ENCODE measurements at regions of chr11 and their contacts with region 1.

Region 1: DNA sequence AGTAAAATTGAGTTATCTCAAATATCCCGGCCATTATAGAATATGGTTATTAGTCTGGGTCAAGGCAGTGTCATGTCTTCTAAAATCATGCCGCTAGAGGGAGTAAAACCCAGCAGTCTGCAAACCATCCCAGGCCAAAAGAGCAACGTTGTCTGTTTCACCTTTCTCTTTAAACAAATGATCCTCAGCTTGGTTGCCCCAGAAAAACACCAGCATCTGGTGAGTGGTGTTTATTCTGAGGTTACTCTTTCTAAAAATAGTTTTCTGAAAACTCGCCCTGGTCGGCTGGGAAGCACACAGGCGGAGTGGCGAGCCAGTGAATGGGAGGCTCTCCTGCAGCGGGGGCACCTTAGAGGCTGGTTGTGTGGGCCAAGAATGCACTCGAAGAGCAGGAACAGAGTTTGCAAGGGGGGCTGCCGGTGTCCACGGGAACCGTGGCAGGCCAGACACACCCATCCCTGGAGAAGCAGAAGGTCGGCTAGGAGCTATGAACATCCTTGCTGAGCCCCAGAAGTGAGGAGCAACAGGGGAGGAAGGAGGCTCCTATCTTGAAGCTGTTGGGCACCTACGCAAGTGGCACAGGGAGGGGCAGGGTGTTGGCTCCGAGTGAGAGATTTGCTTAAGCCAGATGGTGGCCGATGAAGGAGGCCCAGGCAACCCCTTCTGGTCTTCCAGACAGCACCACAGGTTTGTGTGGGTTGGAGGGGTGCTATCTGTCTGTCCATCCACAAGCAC is 297.1 kb downstream of the ETS1 start:
- DNase-seq: peak; percentile 29 to 76
- ATAC-seq: peak; percentile 81 to 91 (median 89)
- H3K4me3 ChIP-seq: peak overlapping the region in 7 of 10 donors; percentile 17 to 43 (median 29)
- H3K27ac ChIP-seq: peak overlapping the region in 9 of 10 donors; percentile 24 to 83 (median 65)
- H3K4me1 ChIP-seq: peaks cover 2 to 53% (median 39%) of the 10 kb centered on the region in 9 donors
- H3K27me3 ChIP-seq: no peaks in the 10 kb centered on the region
- CTCF ChIP-seq: peak; percentile 81 to 94 (median 88)

Region 2: GRCh38 chr11:128172046-128172878 is 118.0 kb before region 1 on chr11:
- intact Hi-C with region 1: loop called in 8 of 10 experiments (anchors 5 to 10 kb)
- DNase-seq: peak; percentile 73 to 87
- ATAC-seq: peak in 7 of 8 donors; percentile 77 to 92 (median 87)
- H3K4me3 ChIP-seq: no peak overlapping the region
- H3K27ac ChIP-seq: peak overlapping the region in 1 of 10 donors; percentile 16
- H3K4me1 ChIP-seq: peaks cover 0 to 13% (median 0%) of the 10 kb centered on the region in 9 donors
- H3K27me3 ChIP-seq: peaks cover 0 to 5% (median 0%) of the 10 kb centered on the region in 7 donors
- CTCF ChIP-seq: peak; percentile 59 to 89 (median 82)

Region 3: DNA sequence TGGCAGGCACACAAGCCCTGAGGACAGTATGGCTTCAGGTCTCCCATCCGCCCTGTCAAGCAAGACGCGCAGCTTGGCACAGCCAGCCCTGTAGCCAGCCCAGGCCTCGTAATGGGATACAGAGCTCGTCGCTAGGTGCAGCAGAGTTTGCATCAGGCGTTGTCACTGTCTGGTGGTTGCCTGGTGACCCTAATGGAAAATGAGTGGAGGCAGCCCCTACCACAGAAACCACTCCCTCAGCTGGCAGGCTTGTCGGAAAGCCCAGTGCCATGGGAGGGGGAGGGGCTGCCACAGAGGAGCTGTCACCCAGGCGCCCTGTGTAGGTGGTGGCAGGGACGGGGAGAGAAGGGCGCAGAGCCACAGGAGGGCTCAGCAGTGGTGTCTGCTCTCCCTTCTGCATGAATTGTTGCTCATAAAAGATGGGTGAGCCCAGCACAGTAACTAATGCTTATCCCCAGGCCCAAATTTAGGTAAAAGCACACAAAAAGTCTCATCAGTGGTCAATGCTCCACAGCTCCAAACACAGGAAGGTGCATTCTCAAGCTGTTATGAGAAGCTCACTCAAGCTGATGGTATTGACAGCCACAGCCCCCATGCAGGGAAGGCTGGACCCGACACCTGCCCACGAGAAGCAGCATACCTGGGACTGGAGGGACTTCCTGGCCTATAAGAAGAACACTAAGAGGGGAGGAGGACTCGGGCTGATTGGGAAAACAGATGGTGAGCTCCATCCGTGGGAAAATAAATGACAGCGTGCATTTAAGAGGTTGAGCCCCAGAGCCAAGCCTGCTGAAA is 132.5 kb after region 1 on chr11:
- intact Hi-C with region 1: loop called in 1 of 10 experiments (anchors 5 kb)
- DNase-seq: peak; percentile 66 to 80
- ATAC-seq: peak in 6 of 8 donors; percentile 44 to 95 (median 66)
- H3K4me3 ChIP-seq: peak overlapping the region in 1 of 10 donors; percentile 6
- H3K27ac ChIP-seq: peak overlapping the region in 8 of 10 donors; percentile 22 to 88 (median 76)
- H3K4me1 ChIP-seq: peaks cover 16 to 48% (median 37%) of the 10 kb centered on the region in 9 donors
- H3K27me3 ChIP-seq: no peaks in the 10 kb centered on the region
- CTCF ChIP-seq: no peak

Region 4: GRCh38 chr11:128506999-128507611 is 216.8 kb after region 1 on chr11:
- intact Hi-C with region 1: loop called in 2 of 10 experiments (anchors 10 kb)
- DNase-seq: peak; percentile 75 to 79
- ATAC-seq: peak; percentile 76 to 96 (median 80)
- H3K4me3 ChIP-seq: peak overlapping the region; percentile 8 to 48 (median 36)
- H3K27ac ChIP-seq: peak overlapping the region; percentile 79 to 97 (median 88)
- H3K4me1 ChIP-seq: peaks cover 30 to 100% (median 100%) of the 10 kb centered on the region in 9 donors
- H3K27me3 ChIP-seq: no peaks in the 10 kb centered on the region
- CTCF ChIP-seq: no peak

Region 5: GRCh38 chr11:128552783-128553661 is 262.7 kb after region 1 on chr11:
- intact Hi-C with region 1: loop called in 5 of 10 experiments (anchors 5 to 10 kb)
- DNase-seq: no peak
- ATAC-seq: peak in 3 of 8 donors; percentile 2 to 54 (median 23)
- H3K4me3 ChIP-seq: no peak overlapping the region
- H3K27ac ChIP-seq: peak overlapping the region in 7 of 10 donors; percentile 34 to 85 (median 50)
- H3K4me1 ChIP-seq: peaks cover 3 to 76% (median 56%) of the 10 kb centered on the region in 9 donors
- H3K27me3 ChIP-seq: no peaks in the 10 kb centered on the region
- CTCF ChIP-seq: no peak

Region 6: GRCh38 chr11:128831174-128832120 is 541.2 kb after region 1 on chr11:
- intact Hi-C with region 1: loop called in 8 of 10 experiments (anchors 2 to 10 kb)
- DNase-seq: peak; percentile 81 to 85
- ATAC-seq: peak; percentile 69 to 84 (median 77)
- H3K4me3 ChIP-seq: peak overlapping the region in 4 of 10 donors; percentile 11 to 40 (median 32)
- H3K27ac ChIP-seq: peak overlapping the region in 4 of 10 donors; percentile 28 to 62 (median 46)
- H3K4me1 ChIP-seq: peaks cover 0 to 55% (median 27%) of the 10 kb centered on the region in 9 donors
- H3K27me3 ChIP-seq: no peaks in the 10 kb centered on the region
- CTCF ChIP-seq: peak; percentile 88 to 93 (median 91)

Measured in heart right ventricle (tissue), 16 donors.